ENCODE measurements at regions of chr1 and their contacts with region 1.

Region 1: GRCh38 chr1:63327417-63328139 is 5.2 kb downstream of the FOXD3 start:
- DNase-seq: peak in 2 of 5 donors; percentile 30 to 43
- H3K4me3 ChIP-seq: no peak overlapping the region
- H3K4me3 Mint-ChIP-seq: peak overlapping the region in 5 of 8 donors; percentile 12 to 47 (median 32)
- H3K27ac ChIP-seq: no peak overlapping the region
- H3K27ac Mint-ChIP-seq: peak overlapping the region in 5 of 7 donors; percentile 15 to 87 (median 69)
- H3K4me1 ChIP-seq: peaks cover 14% of the 10 kb centered on the region
- H3K4me1 Mint-ChIP-seq: peaks cover 17 to 40% (median 26%) of the 10 kb centered on the region in 4 donors
- H3K27me3 ChIP-seq: peaks cover 71% of the 10 kb centered on the region
- H3K27me3 Mint-ChIP-seq: peaks cover 57 to 60% of the 10 kb centered on the region in 2 donors

Region 2: GRCh38 chr1:63367215-63368103 is 39.9 kb after region 1 on chr1 and contains the start of gene ALG6:
- CTCF ChIA-PET with region 1: interaction called, 3 read pairs
- POLR2A ChIA-PET with region 1: no interaction called
- intact Hi-C with region 1: loop called (anchors 2 kb)
- DNase-seq: peak; percentile 79 to 92 (median 86)
- H3K4me3 ChIP-seq: peak within 1 kb of the TSS; percentile 67 to 80
- H3K4me3 Mint-ChIP-seq: peak within 1 kb of the TSS; percentile 93 to 98 (median 94)
- H3K27ac ChIP-seq: peak within 1 kb of the TSS; percentile 59
- H3K27ac Mint-ChIP-seq: peak within 1 kb of the TSS; percentile 67 to 92 (median 89)
- H3K4me1 ChIP-seq: peaks cover 21% of the 10 kb centered on the region
- H3K4me1 Mint-ChIP-seq: peaks cover 21 to 36% (median 29%) of the 10 kb centered on the region in 4 donors
- H3K27me3 ChIP-seq: no peaks in the 10 kb centered on the region
- H3K27me3 Mint-ChIP-seq: peaks cover 0 to 7% of the 10 kb centered on the region in 2 donors
- total RNA-seq, gene ALG6: 27.6 to 28.4 TPM